Right cardiac atrium (tissue), 5 donors: ENCODE measurements at regions of chr11 and their contacts with region 1.

Region 1: GRCh38 chr11:70467201-70468085 is 69.1 kb downstream of the CTTN start:
- DNase-seq: peak; percentile 54 to 84 (median 76)
- ATAC-seq: no peak
- H3K4me3 ChIP-seq: no peak overlapping the region
- H3K27ac ChIP-seq: no peak overlapping the region
- H3K4me1 ChIP-seq: no peaks in the 10 kb centered on the region
- H3K27me3 ChIP-seq: no peaks in the 10 kb centered on the region

Region 2: DNA sequence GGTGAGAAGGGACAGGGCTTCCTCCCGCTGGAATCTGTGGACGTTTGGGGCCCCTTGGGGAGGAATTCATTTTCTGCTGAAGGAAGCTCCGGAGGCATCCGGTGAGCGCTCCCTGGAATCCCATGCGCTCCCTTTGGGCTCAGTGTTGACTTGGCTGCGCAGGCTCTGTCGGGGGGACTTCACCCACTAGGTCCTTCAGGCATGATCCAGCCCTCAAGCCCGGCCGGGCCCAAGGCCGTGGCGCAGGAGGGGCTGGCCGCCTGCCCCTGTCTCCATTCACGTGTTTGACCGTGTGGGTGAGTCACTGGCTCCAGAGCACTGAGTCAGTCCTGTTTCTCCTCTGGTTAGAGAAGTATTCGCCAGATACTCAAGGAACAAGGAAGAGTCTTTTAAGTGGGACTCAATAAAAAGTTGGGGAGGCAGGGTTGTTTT is 67.7 kb before region 1 on chr11:
- intact Hi-C with region 1: no loop called
- DNase-seq: peak; percentile 90 to 92 (median 91)
- ATAC-seq: peak; percentile 69 to 86
- H3K4me3 ChIP-seq: peak overlapping the region; percentile 99
- H3K27ac ChIP-seq: peak overlapping the region; percentile 63
- H3K4me1 ChIP-seq: peaks cover 3% of the 10 kb centered on the region
- H3K27me3 ChIP-seq: no peaks in the 10 kb centered on the region

Region 3: GRCh38 chr11:70755410-70756161 is 288.1 kb after region 1 on chr11:
- intact Hi-C with region 1: loop called (anchors 2 to 5 kb)
- DNase-seq: peak; percentile 77 to 90 (median 87)
- ATAC-seq: peak; percentile 94 to 96
- H3K4me3 ChIP-seq: no peak overlapping the region
- H3K27ac ChIP-seq: no peak overlapping the region
- H3K4me1 ChIP-seq: no peaks in the 10 kb centered on the region
- H3K27me3 ChIP-seq: no peaks in the 10 kb centered on the region